ENCODE measurements at regions of chr11 and their contacts with region 1.

Region 1: DNA sequence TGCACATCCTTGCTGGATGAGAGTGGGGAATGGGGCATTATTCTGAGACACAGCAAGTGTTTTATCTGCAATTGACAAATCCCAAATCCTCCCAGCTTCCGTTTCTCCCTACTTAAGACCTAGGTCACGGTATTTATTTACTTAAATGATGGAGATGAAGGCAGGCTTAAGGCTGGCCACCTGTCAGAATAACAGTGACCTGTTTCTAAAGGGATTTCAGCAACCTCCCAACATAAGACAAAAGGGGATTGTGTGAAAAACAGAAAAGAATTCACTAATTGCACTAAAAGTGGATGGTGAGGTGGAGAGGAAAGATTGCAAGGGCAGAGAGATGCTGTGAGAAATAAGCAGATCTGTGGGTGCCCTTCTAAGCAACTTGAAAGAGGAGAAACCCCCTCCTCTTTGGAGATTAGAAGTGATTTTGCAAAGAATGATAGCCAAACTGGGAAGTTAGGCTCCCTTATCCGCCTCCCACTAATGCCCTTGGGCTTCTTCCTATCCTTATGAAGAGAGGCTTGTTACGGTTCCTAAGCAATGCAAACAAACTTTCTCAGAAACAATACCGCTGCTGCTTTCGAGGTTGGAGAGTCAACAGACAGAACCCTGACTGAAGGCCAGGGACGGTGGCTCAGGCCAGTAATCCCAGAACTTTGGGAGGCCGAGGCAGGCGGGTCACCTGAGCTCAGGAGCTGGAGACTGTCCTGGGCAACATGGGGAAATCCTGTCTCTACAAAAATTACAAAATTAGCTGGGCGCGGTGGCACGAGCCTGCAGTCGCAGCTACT is 84.3 kb downstream of the ARL14EP start:
- DNase-seq: no peak
- ATAC-seq: no peak
- H3K4me3 ChIP-seq: no peak overlapping the region
- H3K4me3 Mint-ChIP-seq: no peak overlapping the region
- H3K27ac ChIP-seq: no peak overlapping the region
- H3K27ac Mint-ChIP-seq: no peak overlapping the region
- H3K4me1 ChIP-seq: no peaks in the 10 kb centered on the region
- H3K4me1 Mint-ChIP-seq: peaks cover 1 to 19% (median 4%) of the 10 kb centered on the region in 3 donors
- H3K27me3 ChIP-seq: no peaks in the 10 kb centered on the region
- H3K27me3 Mint-ChIP-seq: peaks cover 2 to 6% of the 10 kb centered on the region in 2 donors

Region 2: DNA sequence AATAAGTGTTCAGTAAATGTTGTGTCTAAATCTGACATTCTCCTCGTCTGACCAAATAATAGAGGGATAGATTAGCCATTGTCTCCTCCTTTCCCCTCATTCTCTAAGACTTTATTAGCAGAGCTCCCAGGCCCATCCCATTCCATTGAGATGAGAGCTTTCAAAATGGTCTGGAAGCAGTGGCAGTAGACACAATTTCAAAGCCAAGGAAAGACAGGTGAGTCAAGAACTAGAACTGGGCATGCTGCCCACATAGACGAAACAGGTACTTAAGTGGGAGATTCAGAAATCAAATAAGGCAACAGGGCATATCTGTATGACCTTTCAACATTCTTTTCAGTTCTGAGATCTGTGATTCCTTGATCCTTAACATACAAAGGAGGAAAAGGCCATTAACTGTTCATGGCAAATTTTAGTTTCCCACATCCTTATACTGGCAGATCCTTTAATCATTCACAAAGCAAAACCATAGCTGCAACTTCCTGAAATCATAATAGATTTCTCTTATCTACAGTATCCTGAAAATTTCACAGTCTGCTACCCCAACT is 293.8 kb before region 1 on chr11:
- CTCF ChIA-PET with region 1: no interaction called
- POLR2A ChIA-PET with region 1: interaction called in 1 of 2 experiments, 12 read pairs
- DNase-seq: no peak
- ATAC-seq: no peak
- H3K4me3 ChIP-seq: no peak overlapping the region
- H3K4me3 Mint-ChIP-seq: no peak overlapping the region
- H3K27ac ChIP-seq: no peak overlapping the region
- H3K27ac Mint-ChIP-seq: no peak overlapping the region
- H3K4me1 ChIP-seq: no peaks in the 10 kb centered on the region
- H3K4me1 Mint-ChIP-seq: no peaks in the 10 kb centered on the region
- H3K27me3 ChIP-seq: no peaks in the 10 kb centered on the region
- H3K27me3 Mint-ChIP-seq: peaks cover 0 to 6% of the 10 kb centered on the region in 2 donors

Region 3: DNA sequence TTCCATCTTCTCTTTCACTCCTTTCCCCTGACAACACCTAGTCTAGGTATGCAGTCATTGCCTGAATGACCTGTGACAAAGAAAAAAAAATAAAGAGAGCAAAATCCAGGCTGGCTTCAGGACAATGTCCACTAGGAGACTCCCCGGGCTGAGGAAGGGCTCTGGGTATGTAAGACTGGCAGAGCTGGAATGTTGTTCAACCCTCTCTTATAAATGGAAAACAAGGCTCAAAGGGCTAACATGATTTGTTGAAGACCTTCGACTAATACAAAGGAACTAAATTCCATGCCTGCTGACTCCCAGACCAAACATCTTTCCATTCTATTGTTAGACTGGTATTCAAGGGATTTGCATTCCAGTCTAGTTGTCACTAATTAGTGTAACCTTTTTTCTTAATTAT is 37.9 kb after region 1 on chr11:
- CTCF ChIA-PET with region 1: no interaction called
- POLR2A ChIA-PET with region 1: no interaction called
- DNase-seq: no peak
- ATAC-seq: no peak
- H3K4me3 ChIP-seq: no peak overlapping the region
- H3K4me3 Mint-ChIP-seq: no peak overlapping the region
- H3K27ac ChIP-seq: no peak overlapping the region
- H3K27ac Mint-ChIP-seq: no peak overlapping the region
- H3K4me1 ChIP-seq: no peaks in the 10 kb centered on the region
- H3K4me1 Mint-ChIP-seq: no peaks in the 10 kb centered on the region
- H3K27me3 ChIP-seq: no peaks in the 10 kb centered on the region
- H3K27me3 Mint-ChIP-seq: peaks cover 0 to 3% of the 10 kb centered on the region in 2 donors

Region 4: DNA sequence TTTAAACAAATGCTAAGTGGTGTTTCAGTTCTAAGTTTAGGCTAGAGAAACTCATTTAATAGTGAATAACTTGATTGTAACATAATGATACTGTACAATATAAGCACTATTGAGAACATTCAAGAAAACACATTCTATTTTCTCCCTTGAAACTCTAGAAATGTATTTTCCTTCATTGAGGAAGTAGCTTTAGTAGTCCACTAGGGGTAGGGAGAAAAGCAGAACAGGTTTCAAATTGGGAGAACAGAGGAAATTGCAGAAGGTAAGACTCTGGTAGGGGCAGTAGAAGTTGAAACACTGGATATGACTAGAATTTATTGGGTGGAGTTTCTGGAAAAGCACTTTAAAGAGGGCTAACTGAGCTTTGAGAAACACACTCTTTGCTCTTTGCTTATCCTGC is 210.6 kb after region 1 on chr11:
- CTCF ChIA-PET with region 1: no interaction called
- POLR2A ChIA-PET with region 1: no interaction called
- DNase-seq: no peak
- ATAC-seq: no peak
- H3K4me3 ChIP-seq: no peak overlapping the region
- H3K4me3 Mint-ChIP-seq: no peak overlapping the region
- H3K27ac ChIP-seq: no peak overlapping the region
- H3K27ac Mint-ChIP-seq: no peak overlapping the region
- H3K4me1 ChIP-seq: no peaks in the 10 kb centered on the region
- H3K4me1 Mint-ChIP-seq: no peaks in the 10 kb centered on the region
- H3K27me3 ChIP-seq: no peaks in the 10 kb centered on the region
- H3K27me3 Mint-ChIP-seq: peaks cover 0 to 6% of the 10 kb centered on the region in 2 donors

Measured in T-cell (primary cell).